ENCODE measurements at regions of chr17 and their contacts with region 1.

Region 1: GRCh38 chr17:38752119-38752929 is at the start of gene PSMB3:
- DNase-seq: peak; percentile 87
- ATAC-seq: peak; percentile 89
- H3K4me3 Mint-ChIP-seq: peak within 1 kb of the TSS; percentile 98
- H3K27ac Mint-ChIP-seq: peak within 1 kb of the TSS; percentile 93
- H3K4me1 Mint-ChIP-seq: peaks cover 54% of the 10 kb centered on the region
- H3K27me3 Mint-ChIP-seq: peaks cover 25% of the 10 kb centered on the region
- CTCF ChIP-seq: no peak
- total RNA-seq, gene PSMB3: 234 and 250 TPM in 2 replicates

Region 2: DNA sequence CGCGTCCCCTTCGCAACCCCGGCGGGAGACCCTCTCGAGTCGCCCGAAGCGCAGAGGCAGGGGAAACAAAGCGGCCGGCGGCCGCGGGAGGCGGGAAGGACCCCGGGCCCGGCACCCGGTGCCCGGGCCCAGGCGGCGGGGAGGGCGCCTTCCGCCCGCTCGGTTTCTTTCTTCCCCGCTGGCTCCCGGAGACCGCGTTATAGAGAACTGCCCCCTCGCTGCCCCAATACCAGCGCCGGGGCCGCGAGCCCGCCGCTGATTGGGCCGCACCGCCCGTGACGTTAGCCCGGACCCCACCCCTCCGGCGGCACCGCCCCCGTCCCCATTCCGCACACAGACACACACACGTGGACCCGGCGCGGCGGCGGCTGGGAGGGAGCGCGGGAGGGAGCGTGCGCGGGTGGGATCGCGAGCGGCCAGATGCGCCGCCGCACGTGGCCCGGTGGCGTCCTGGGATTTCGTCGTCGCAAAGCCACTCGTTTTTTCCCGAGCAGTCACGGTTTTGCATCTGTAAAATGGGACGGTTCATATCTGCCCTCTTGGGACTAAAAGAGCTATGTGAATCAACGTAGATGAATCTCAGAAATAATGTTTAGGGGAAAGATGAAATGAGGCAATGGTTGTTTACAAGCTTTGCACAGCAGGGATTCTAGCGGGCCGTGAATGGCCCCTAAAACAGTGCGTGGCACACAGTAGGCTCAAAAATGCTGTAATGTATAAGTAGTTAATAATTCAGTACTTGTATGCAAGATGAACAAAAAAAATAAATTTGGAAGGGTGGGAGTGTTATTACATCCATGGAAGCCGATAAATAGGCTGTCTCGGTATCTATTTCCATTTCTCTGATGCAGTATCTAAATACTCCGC is 77.3 kb before region 1 on chr17 and contains the start of gene EPOP:
- CTCF ChIA-PET with region 1: interaction called, 3 read pairs
- POLR2A ChIA-PET with region 1: interaction called, 8 read pairs
- intact Hi-C with region 1: loop called (anchors 1 kb)
- DNase-seq: peak; percentile 79
- ATAC-seq: peak; percentile 88
- H3K4me3 Mint-ChIP-seq: peak within 1 kb of the TSS; percentile 70
- H3K27ac Mint-ChIP-seq: no peak within 1 kb of the TSS
- H3K4me1 Mint-ChIP-seq: peaks cover 32% of the 10 kb centered on the region
- H3K27me3 Mint-ChIP-seq: peaks cover 29% of the 10 kb centered on the region
- CTCF ChIP-seq: no peak
- total RNA-seq, gene EPOP: 2.8 and 3.0 TPM in 2 replicates

Region 3: DNA sequence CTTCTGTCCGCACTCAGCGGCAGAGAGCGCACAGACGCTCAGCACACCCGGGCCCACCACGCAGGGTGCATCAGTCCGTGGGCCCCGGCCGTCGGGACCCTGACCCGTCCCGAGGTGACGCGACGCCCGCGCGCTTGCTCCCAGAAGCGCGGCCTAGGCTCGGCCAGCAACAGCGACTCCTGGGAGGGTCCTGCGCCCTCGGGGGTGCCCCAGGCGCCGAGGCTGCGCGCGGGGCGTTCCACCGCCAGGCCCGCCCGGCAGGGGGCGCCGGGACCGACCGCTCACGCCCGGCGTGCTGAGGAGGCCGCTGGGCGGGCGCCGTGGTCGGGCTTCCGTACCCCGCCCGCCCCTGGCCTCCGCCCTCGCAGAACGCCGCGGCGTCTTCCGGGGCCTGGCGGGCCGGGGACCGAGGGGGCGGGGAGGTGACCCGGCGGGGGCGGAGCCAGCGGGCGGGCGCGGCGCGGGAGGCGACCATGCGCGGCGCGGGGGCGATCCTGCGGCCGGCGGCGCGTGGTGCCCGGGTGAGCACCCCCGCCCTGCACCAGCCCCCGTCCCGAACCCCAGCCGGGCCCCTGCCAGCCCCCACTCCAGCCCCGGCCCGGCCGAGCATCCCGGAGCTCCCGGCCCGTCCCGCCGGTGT is 22.3 kb before region 1 on chr17 and contains the start of gene CISD3:
- CTCF ChIA-PET with region 1: interaction called, 11 read pairs
- POLR2A ChIA-PET with region 1: interaction called, 5 read pairs
- intact Hi-C with region 1: loop called (anchors 1 kb)
- DNase-seq: peak; percentile 91
- ATAC-seq: peak; percentile 91
- H3K4me3 Mint-ChIP-seq: peak within 1 kb of the TSS; percentile 82
- H3K27ac Mint-ChIP-seq: peak within 1 kb of the TSS; percentile 79
- H3K4me1 Mint-ChIP-seq: peaks cover 58% of the 10 kb centered on the region
- H3K27me3 Mint-ChIP-seq: no peaks in the 10 kb centered on the region
- CTCF ChIP-seq: no peak
- total RNA-seq, gene CISD3: 11.2 and 12.1 TPM in 2 replicates

Region 4: DNA sequence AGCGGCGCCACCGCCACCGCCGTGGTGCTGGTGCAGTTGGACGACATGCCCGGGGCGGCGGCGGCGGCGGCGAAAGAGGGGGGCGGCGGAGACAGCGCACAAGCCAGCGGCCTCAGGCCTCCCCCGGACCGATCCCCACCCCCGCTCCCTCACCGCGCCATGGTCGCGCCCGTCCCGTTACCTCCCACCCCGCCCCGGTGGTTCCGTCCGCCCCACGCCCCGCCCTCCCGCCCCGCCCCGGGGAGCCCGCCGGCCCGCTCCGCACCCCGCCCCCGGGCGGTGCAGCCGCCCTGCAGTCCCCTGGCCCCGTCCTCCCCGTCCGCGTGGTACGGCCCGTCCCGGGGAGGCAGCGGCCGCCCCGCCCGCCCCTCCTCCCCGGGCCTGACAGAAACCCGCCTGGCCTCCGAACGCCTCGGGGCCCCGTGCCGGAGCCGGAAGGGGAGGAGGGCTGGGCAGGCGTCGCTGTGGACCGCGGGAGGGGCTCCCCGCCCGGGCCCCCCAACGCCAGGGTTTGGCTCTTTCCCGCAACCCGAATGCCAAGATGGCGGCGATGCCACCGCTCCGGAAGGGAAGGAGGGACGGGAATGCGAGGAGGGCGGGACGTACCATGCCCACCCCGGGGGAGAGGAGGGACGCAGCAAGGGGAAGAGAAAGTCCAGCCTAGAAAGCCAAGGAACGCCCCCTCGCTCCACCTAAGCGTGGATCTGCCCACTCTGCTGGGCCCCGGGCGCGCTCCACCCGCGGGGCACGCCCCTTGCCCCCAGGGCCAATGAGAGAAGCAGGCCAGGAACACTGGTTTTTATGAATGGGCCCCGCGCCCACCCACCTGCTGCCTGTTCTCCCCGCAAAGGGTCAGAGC is 47.3 kb after region 1 on chr17 and contains the start of gene PIP4K2B:
- CTCF ChIA-PET with region 1: no interaction called
- POLR2A ChIA-PET with region 1: interaction called, 8 read pairs
- intact Hi-C with region 1: loop called (anchors 1 kb)
- DNase-seq: peak; percentile 86
- ATAC-seq: peak; percentile 85
- H3K4me3 Mint-ChIP-seq: peak within 1 kb of the TSS; percentile 88
- H3K27ac Mint-ChIP-seq: peak within 1 kb of the TSS; percentile 87
- H3K4me1 Mint-ChIP-seq: peaks cover 32% of the 10 kb centered on the region
- H3K27me3 Mint-ChIP-seq: no peaks in the 10 kb centered on the region
- CTCF ChIP-seq: no peak
- total RNA-seq, gene PIP4K2B: 32.1 and 33.0 TPM in 2 replicates

Region 5: DNA sequence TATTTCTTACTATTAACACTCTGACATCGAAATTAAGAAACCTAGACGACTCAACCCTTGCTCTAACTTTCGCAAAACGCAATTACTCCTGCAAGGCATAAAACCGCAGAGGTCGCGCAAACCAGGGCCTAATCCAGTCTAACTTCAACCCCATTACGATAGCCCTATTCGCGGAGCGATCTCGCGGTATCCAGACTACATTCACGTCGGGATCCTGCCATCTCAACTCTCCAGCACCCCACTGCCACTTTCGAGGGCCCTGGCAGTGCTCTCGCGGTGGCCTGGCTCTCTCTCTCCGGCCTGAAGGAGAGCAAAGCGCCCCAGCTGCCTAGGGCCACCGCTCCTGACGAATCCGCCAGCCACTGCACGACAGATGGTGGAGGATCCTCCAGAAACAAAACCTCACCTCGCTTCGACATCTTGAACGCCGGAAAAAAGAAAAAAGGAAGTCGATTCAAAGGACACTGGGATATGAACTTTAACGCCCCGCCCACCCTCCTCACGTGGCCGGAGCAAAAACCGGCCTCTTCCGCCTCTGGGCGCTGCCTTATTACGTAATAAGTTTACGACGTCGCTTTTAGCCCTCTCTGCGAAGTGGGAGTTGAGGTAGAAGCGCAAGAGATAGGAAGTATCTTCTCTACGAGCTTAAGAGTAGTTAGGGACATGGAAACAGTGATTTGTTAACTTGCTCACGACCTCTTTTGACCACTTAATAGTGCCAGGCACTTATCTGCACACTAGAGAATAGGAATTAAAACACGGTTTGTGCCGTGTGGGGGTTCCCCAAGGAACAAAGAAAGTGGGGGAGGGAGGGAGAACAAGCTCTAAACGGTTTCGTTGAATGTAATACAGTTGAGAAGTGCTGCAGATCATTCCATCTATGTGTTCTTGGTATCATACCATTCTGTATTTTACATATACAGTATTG is 101.2 kb after region 1 on chr17 and contains the start of gene RPL23:
- CTCF ChIA-PET with region 1: no interaction called
- POLR2A ChIA-PET with region 1: interaction called, 18 read pairs
- intact Hi-C with region 1: loop called (anchors 1 kb)
- DNase-seq: peak; percentile 79
- ATAC-seq: peak; percentile 86
- H3K4me3 Mint-ChIP-seq: peak within 1 kb of the TSS; percentile 99
- H3K27ac Mint-ChIP-seq: peak within 1 kb of the TSS; percentile 100
- H3K4me1 Mint-ChIP-seq: peaks cover 43% of the 10 kb centered on the region
- H3K27me3 Mint-ChIP-seq: no peaks in the 10 kb centered on the region
- CTCF ChIP-seq: no peak
- total RNA-seq, gene RPL23: 2,652 and 3,293 TPM in 2 replicates